ENCODE measurements at regions of chr16 and their contacts with region 1.

Region 1: DNA sequence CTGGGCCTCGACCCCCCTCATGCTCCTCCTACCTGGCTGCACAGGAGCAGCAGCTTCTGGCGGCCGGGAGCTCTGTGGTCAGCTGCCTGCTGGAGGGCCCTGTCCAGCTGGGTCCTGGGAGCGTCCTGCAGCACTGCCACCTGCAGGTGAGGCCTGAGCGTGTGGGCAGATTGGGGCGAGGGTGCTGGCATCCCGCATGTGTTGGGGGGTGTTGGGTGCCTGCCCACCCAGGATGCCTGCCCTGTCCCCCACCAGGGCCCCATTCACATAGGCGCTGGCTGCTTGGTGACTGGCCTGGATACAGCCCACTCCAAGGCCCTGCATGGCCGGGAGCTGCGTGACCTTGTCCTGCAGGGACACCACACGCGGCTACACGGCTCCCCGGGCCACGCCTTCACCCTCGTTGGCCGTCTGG is 16.5 kb downstream of the FCSK start:
- DNase-seq: no peak
- H3K4me3 Mint-ChIP-seq: no peak overlapping the region
- H3K27ac Mint-ChIP-seq: no peak overlapping the region
- H3K4me1 Mint-ChIP-seq: no peaks in the 10 kb centered on the region
- H3K27me3 Mint-ChIP-seq: no peaks in the 10 kb centered on the region

Region 2: GRCh38 chr16:70402916-70403659 is 67.8 kb before region 1 on chr16:
- intact Hi-C with region 1: loop called (anchors 1 kb)
- DNase-seq: no peak
- H3K4me3 Mint-ChIP-seq: peak overlapping the region; percentile 10
- H3K27ac Mint-ChIP-seq: peak overlapping the region; percentile 92
- H3K4me1 Mint-ChIP-seq: peaks cover 43% of the 10 kb centered on the region
- H3K27me3 Mint-ChIP-seq: no peaks in the 10 kb centered on the region

Region 3: DNA sequence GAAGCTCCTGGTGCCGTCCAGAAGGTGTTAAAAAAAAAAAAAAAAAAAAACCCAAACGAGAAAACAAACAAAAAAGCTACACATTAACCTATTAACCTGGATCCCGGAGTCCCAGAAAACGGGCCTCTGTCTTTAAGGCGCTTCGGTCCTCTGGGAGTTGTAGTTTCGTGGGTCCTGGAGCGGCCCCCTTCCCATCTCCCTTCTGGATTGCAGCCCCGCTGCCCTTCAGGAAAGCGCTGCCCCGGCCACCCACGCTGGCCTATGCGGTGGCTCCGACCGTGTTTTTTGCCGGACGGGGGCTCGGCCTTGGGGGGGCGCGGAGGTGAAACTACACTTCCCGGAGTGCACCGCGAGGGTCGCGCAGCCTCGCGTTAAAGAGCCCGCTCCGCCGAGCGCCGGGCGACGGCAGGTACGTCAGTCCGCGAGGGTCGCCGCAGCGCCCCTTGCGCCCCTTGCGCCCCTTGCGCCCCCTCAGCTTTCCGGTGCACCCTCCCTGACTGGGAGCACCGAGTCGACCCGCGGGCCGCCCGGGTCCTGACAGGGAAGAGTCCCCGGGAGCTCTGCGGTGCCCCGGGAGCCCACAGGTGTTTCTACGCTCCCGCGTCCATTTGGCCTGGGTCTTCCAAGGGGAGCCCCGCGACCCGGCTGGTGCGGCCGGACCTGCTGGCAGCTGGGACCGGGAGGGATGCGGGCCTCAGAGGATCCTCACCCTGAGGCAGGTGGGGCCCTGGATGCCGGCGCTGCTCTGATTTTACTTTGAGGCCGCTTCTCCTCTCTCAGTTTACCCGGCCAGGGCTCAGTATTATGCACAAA is 16.5 kb before region 1 on chr16 and contains the start of gene FCSK:
- intact Hi-C with region 1: loop called (anchors 1 kb)
- DNase-seq: peak; percentile 52
- H3K4me3 Mint-ChIP-seq: peak within 1 kb of the TSS; percentile 91
- H3K27ac Mint-ChIP-seq: peak within 1 kb of the TSS; percentile 83
- H3K4me1 Mint-ChIP-seq: peaks cover 21% of the 10 kb centered on the region
- H3K27me3 Mint-ChIP-seq: no peaks in the 10 kb centered on the region
- total RNA-seq, gene FCSK: 19.7 and 21.0 TPM in 2 replicates

Region 4: DNA sequence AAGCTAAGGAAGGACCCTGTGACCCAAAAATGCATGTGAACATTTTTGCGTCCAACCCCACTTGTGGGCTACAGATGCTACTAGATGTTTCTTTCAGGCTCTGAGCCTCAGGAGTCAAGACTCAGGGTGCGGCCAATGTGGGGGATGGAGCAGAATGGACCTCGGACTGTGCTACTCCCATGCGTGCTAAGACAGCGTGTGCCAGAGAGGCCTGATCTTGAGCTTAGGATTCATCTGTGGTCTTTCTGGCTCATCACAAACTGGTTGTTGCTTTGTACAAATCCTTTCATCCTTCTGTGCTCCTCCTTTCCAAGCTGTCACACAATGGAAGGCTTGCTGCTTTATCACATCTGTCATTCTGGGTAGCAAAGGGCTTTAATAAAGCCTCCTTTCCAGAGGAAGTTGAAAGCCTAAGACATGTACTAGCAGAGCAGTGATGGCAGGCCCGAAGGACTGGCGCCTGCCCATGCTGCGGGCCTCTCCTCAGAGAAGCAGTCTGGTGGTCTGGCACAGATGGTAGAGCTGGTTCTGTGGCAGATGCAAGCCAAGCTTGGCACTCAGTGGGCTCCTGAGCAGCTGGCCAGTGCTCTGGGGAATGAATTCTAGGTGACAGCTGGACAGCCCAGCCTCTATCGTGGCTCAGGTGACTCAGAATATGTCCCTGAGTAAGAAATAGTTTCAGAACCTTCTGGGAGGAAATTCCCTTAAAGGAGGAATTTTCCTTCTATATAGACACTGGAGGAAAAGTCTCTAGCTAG is 24.7 kb after region 1 on chr16:
- intact Hi-C with region 1: loop called (anchors 1 kb)
- DNase-seq: no peak
- H3K4me3 Mint-ChIP-seq: no peak overlapping the region
- H3K27ac Mint-ChIP-seq: no peak overlapping the region
- H3K4me1 Mint-ChIP-seq: peaks cover 17% of the 10 kb centered on the region
- H3K27me3 Mint-ChIP-seq: no peaks in the 10 kb centered on the region